ENCODE measurements at regions of chr5 and their contacts with region 1.

Region 1: DNA sequence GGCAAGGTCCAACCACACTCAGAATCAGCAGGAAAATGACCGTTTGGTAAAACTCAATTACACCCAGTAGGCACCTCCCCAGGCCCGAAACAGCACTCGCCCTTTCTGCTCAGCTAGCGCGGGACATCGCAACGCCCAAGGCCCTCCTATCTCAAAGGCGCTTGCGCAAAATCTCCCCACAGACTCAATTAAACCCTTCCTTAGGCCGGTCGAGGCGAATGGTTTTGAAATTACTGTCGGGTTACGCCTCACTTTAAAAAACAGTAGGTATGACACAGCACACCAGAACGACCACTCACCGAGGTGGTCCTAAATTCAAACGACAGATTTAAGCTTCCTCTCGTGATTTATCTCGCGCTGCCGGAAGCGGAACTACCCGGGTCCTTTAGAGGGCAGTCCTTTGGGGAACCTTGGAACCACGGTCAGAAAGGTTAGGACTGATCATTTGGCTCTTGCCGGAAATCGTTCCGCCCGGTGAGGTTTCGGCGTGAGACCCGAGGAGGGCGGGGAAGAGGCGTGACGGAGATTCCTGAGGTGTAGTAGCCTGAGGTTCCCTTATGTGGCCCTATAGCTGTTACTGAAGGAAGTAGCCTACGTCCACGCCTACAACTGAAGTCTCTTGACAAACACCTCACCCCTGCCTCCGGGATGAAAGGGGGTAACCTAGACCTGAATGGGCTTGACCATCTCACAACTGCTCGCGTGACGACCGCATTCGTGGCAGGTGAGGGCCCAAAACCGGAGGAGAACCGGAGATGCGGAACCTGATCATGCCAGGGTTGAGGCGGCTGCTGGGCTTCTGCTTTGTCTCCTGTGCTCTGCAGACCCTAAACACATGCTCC is at the starts of genes GIN1 and PPIP5K2:
- DNase-seq: peak; percentile 98
- H3K4me3 Mint-ChIP-seq: peak within 1 kb of the TSS; percentile 89
- H3K27ac Mint-ChIP-seq: peak within 1 kb of the TSS; percentile 98
- H3K4me1 Mint-ChIP-seq: peaks cover 21% of the 10 kb centered on the region
- H3K27me3 Mint-ChIP-seq: no peaks in the 10 kb centered on the region
- CTCF ChIP-seq: no peak
- total RNA-seq, gene GIN1: 10.3 and 12.0 TPM in 2 replicates
- total RNA-seq, gene PPIP5K2: 51.7 and 67.2 TPM in 2 replicates

Region 2: GRCh38 chr5:103060424-103060954 is 59.5 kb before region 1 on chr5:
- CTCF ChIA-PET with region 1: no interaction called
- intact Hi-C with region 1: loop called (anchors 2 kb)
- DNase-seq: peak; percentile 4
- H3K4me3 Mint-ChIP-seq: no peak overlapping the region
- H3K27ac Mint-ChIP-seq: no peak overlapping the region
- H3K4me1 Mint-ChIP-seq: peaks cover 44% of the 10 kb centered on the region
- H3K27me3 Mint-ChIP-seq: no peaks in the 10 kb centered on the region
- CTCF ChIP-seq: no peak